GM12878 (cell line): ENCODE measurements at regions of chr1 and their contacts with region 1.

Region 1: DNA sequence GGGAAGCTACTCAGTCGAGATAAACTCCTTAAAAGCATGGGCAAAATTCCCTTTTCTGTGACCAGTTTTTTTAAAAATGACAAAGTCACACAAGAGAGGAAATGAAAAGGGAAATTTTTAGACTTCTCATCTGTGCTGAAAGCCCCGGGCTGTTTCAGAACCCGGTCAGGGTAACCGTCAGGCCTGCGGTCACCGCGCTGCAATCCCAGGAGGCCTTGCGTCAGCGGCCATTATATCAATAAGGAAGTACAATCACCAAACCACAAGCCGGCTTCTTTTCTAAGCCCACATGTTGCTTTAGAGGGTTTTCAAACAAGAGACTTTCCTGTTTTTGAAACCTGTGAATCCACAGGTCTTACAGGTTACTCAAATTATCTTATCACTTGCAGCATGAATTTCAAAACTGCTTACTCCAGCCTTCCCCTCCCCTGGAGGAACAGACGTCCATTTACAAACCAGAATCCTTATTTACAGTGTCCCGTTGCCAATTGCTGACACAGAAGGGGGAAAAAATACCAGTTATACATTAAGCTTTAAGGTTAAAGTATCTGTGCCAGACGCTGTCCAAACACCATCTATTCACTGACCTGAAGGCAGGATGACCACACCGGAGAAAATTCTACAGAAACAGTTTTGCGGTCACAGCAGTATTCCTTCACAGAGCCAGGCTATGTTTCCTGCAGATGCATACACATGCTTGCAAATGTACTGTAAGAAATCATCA is 165.3 kb downstream of the TOMM20 start:
- DNase-seq: peak; percentile 97
- ATAC-seq: peak; percentile 79
- H3K4me3 ChIP-seq: peak overlapping the region; percentile 45; the same call in 1 of the 2 replicates
- H3K27ac ChIP-seq: peak overlapping the region; percentile 96
- H3K4me1 ChIP-seq: peaks cover 59% of the 10 kb centered on the region
- H3K27me3 ChIP-seq: no peaks in the 10 kb centered on the region
- CTCF ChIP-seq: no peak
- EP300 ChIP-seq: peak; percentile 95 to 99
- POLR2A ChIP-seq: no peak
- RAD21 ChIP-seq: 0 out of 2 replicates have a peak, but pooled peaks have one; percentile 24

Region 2: GRCh38 chr1:234599617-234600417 is 363.5 kb before region 1 on chr1:
- CTCF ChIA-PET with region 1: interaction called, 4 read pairs
- POLR2A ChIA-PET with region 1: interaction called, 5 read pairs
- RAD21 ChIA-PET with region 1: interaction called, 11 read pairs
- SMC1A ChIA-PET with region 1: interaction called, 9 read pairs
- in situ Hi-C with region 1: no loop called
- intact Hi-C with region 1: no loop called
- DNase-seq: no peak
- ATAC-seq: peak; percentile 76
- H3K4me3 ChIP-seq: peak overlapping the region; percentile 67; the same call in 1 of the 2 replicates
- H3K27ac ChIP-seq: peak overlapping the region; percentile 75
- H3K4me1 ChIP-seq: peaks cover 22% of the 10 kb centered on the region
- H3K27me3 ChIP-seq: no peaks in the 10 kb centered on the region
- CTCF ChIP-seq: 0 out of 6 replicates have a peak, but pooled peaks of 1 of the 3 experiments have one; percentile 5
- EP300 ChIP-seq: 0 out of 4 replicates have a peak, but pooled peaks of 1 of the 2 experiments have one; percentile 42
- POLR2A ChIP-seq: peak; percentile 70; the same call in 1 of the 2 replicates
- RAD21 ChIP-seq: no peak

Region 3: DNA sequence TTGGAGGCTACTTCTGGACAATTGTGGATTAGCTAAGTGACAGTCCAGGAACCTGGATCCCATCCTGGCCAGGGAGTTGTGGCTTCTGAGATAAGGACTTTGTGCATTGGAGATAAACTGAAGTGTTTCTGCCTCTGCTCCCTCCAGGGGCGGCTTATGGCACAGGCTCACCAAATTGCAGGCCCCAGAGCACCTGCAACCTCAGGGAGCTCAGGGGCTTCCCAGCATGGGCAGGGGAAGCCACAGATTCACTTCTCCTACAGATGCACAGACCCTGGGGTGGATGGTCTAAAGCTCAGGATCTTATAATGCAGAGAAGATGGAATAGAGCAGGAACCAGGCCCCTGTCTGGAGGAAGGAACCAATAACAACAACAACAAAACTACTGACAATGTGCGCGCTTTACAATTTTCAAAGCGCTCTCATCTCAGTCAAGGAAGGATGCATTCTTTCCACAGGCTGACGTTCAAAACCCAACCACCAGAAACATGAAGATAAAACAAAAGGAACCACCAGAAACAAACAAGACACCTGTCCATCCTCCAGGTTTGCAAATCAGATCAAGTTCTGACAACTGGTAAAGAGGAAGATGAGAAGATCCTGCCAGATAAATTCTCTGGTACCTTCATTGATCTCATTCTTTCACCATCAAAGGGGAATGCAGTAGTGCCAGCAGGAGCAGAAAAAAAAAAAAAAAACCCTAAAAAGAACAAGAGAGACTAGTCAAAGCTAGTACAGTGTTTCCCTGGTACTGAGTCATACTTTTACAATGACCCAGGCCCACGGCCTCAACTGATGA is 232.4 kb before region 1 on chr1:
- CTCF ChIA-PET with region 1: no interaction called
- POLR2A ChIA-PET with region 1: interaction called, 3 read pairs
- RAD21 ChIA-PET with region 1: interaction called, 15 read pairs
- SMC1A ChIA-PET with region 1: interaction called, 4 read pairs
- in situ Hi-C with region 1: no loop called
- intact Hi-C with region 1: loop called (anchors 2 kb)
- DNase-seq: peak; percentile 68
- ATAC-seq: peak; percentile 80
- H3K4me3 ChIP-seq: peak overlapping the region; percentile 17; the same call in 1 of the 2 replicates
- H3K27ac ChIP-seq: peak overlapping the region; percentile 82
- H3K4me1 ChIP-seq: peaks cover 59% of the 10 kb centered on the region
- H3K27me3 ChIP-seq: no peaks in the 10 kb centered on the region
- CTCF ChIP-seq: peak; percentile 17 to 30 (median 28); a peak in 3 of 6 replicates
- EP300 ChIP-seq: peak; percentile 53 to 57; a peak in 3 of 4 replicates
- POLR2A ChIP-seq: no peak
- RAD21 ChIP-seq: peak; percentile 46; the same call in 1 of the 2 replicates

Region 4: DNA sequence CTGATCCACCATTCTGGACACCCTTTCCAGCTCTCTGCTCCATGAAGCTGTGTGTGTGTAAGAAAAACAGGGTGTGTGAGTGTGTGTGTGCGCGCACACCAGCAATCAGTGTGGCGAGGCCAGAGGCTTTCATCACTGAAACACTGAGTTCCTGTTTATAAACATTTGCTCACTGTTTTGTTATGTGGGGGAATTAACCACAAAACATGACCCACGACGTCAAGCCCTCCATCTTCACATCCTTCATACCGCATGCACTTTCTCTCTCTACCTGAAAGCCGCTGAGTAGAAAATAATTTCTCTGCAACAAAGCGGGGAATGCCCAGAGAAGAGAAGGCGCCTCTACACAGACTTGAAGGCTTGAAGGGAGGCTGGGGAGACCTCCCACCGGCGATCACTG is 204.5 kb before region 1 on chr1:
- CTCF ChIA-PET with region 1: no interaction called
- POLR2A ChIA-PET with region 1: no interaction called
- RAD21 ChIA-PET with region 1: no interaction called
- SMC1A ChIA-PET with region 1: no interaction called
- in situ Hi-C with region 1: no loop called
- intact Hi-C with region 1: no loop called
- DNase-seq: no peak
- ATAC-seq: peak; percentile 42; the same call in 2 of the 3 replicates
- H3K4me3 ChIP-seq: no peak overlapping the region
- H3K27ac ChIP-seq: no peak overlapping the region
- H3K4me1 ChIP-seq: peaks cover 6% of the 10 kb centered on the region
- H3K27me3 ChIP-seq: no peaks in the 10 kb centered on the region
- CTCF ChIP-seq: no peak
- EP300 ChIP-seq: 0 out of 4 replicates have a peak, but pooled peaks of 1 of the 2 experiments have one; percentile 13
- POLR2A ChIP-seq: no peak
- RAD21 ChIP-seq: 0 out of 2 replicates have a peak, but pooled peaks have one; percentile 1

Region 5: DNA sequence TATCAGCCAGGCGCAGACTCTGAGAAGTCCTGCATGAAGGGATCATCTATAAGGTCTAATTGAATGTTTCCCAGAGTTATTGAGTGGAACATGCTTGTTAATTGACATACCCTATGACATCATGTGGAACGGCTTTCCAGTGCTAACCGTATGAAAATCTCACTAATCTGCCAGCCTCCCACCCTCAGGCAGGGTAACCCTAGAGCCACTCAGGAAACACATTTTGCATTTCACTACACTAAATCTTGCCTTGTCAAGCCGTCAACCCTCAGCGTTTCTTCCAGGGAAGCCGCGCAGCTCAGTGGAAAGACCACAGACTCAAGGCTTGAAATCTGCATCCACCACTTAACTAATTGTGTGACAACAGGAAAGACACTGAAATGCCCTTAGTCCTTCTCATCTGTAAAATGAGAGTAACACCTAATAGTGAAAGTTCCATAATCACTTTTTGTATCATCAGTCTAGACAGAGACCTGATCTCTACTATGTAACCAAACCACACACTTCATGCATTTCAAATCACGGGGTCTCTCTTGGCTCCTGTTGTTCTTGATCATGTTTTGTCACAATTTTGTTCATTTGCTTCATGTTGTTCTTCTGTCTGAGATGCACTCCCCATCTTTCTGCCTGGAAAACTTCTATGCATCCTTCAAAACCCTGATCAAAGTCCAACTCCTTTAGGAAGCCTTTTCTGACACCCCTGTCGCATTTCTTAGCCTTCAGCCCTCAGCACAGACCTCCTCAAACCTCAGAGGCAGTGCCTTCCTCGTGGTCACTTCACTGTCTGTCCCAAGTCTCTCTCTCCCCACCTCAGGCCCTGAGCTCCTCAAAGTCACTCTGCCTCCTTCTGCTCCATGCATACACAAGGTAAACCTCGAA is 81.2 kb before region 1 on chr1:
- CTCF ChIA-PET with region 1: no interaction called
- POLR2A ChIA-PET with region 1: no interaction called
- RAD21 ChIA-PET with region 1: interaction called, 16 read pairs
- SMC1A ChIA-PET with region 1: interaction called, 7 read pairs
- in situ Hi-C with region 1: no loop called
- intact Hi-C with region 1: loop called (anchors 2 kb)
- DNase-seq: peak; percentile 83
- ATAC-seq: peak; percentile 88
- H3K4me3 ChIP-seq: peak overlapping the region; percentile 53
- H3K27ac ChIP-seq: peak overlapping the region; percentile 73
- H3K4me1 ChIP-seq: peaks cover 50% of the 10 kb centered on the region
- H3K27me3 ChIP-seq: no peaks in the 10 kb centered on the region
- CTCF ChIP-seq: no peak
- EP300 ChIP-seq: peak; percentile 90 to 94
- POLR2A ChIP-seq: no peak
- RAD21 ChIP-seq: no peak

Region 6: DNA sequence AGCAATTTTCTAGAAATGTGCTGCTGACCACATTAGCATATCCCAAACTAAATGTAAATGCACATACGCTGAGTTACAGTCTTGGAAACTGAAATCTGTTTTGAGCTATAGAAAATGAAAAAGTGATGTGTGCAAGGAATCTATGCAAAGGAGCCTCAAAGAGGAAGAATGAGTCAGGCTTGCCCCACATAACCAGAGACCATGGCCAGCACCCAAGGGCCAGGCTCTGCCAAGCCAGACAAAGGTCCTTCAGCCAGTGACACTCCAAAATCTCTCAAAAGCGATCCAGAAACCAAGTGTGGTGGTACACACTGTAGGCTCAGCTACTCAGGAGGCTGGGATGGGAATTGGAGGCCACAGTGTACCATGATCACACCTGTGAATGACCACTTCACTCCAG is 29.9 kb before region 1 on chr1:
- CTCF ChIA-PET with region 1: no interaction called
- POLR2A ChIA-PET with region 1: interaction called, 4 read pairs
- RAD21 ChIA-PET with region 1: interaction called, 48 read pairs
- SMC1A ChIA-PET with region 1: interaction called, 44 read pairs
- in situ Hi-C with region 1: no loop called
- intact Hi-C with region 1: no loop called
- DNase-seq: peak; percentile 85
- ATAC-seq: peak; percentile 95
- H3K4me3 ChIP-seq: peak overlapping the region; percentile 44; the same call in 1 of the 2 replicates
- H3K27ac ChIP-seq: peak overlapping the region; percentile 95
- H3K4me1 ChIP-seq: peaks cover 41% of the 10 kb centered on the region
- H3K27me3 ChIP-seq: no peaks in the 10 kb centered on the region
- CTCF ChIP-seq: no peak
- EP300 ChIP-seq: peak; percentile 75 to 81
- POLR2A ChIP-seq: peak; percentile 55; the same call in 1 of the 2 replicates
- RAD21 ChIP-seq: no peak

Region 7: GRCh38 chr1:234987415-234988154 is 24.2 kb after region 1 on chr1:
- CTCF ChIA-PET with region 1: interaction called, 4 read pairs
- POLR2A ChIA-PET with region 1: interaction called, 6 read pairs
- RAD21 ChIA-PET with region 1: interaction called, 5 read pairs
- SMC1A ChIA-PET with region 1: interaction called, 14 read pairs
- in situ Hi-C with region 1: no loop called
- intact Hi-C with region 1: loop called (anchors 2 kb)
- DNase-seq: no peak
- ATAC-seq: peak; percentile 81
- H3K4me3 ChIP-seq: no peak overlapping the region
- H3K27ac ChIP-seq: peak overlapping the region; percentile 80
- H3K4me1 ChIP-seq: peaks cover 62% of the 10 kb centered on the region
- H3K27me3 ChIP-seq: no peaks in the 10 kb centered on the region
- CTCF ChIP-seq: no peak
- EP300 ChIP-seq: peak in 1 of 2 experiments; percentile 24; a peak in 1 of 4 replicates
- POLR2A ChIP-seq: no peak; the same call in 1 of the 2 replicates
- RAD21 ChIP-seq: no peak

Region 8: GRCh38 chr1:235018161-235018560 is 54.8 kb after region 1 on chr1:
- CTCF ChIA-PET with region 1: interaction called, 4 read pairs
- POLR2A ChIA-PET with region 1: interaction called, 4 read pairs
- RAD21 ChIA-PET with region 1: interaction called, 257 read pairs
- SMC1A ChIA-PET with region 1: interaction called, 229 read pairs
- in situ Hi-C with region 1: no loop called
- intact Hi-C with region 1: no loop called
- DNase-seq: no peak
- ATAC-seq: no peak
- H3K4me3 ChIP-seq: no peak overlapping the region
- H3K27ac ChIP-seq: peak overlapping the region; percentile 24; the same call in 1 of the 2 replicates
- H3K4me1 ChIP-seq: peaks cover 63% of the 10 kb centered on the region
- H3K27me3 ChIP-seq: no peaks in the 10 kb centered on the region
- CTCF ChIP-seq: no peak
- EP300 ChIP-seq: no peak
- POLR2A ChIP-seq: no peak
- RAD21 ChIP-seq: no peak